Gastrocnemius medialis (tissue), 4 donors: ENCODE measurements at regions of chr5 and their contacts with region 1.

Region 1: GRCh38 chr5:38167562-38167996 is 90.8 kb upstream of the EGFLAM start:
- DNase-seq: peak; percentile 90 to 91
- ATAC-seq: peak; percentile 50 to 63
- H3K4me3 ChIP-seq: peak overlapping the region; percentile 28 to 39 (median 37)
- H3K27ac ChIP-seq: peak overlapping the region; percentile 84 to 89 (median 87)
- H3K4me1 ChIP-seq: peaks cover 45 to 46% of the 10 kb centered on the region in 2 donors
- H3K27me3 ChIP-seq: no peaks in the 10 kb centered on the region
- CTCF ChIP-seq: no peak
- POLR2A ChIP-seq: peak; percentile 9 to 64

Region 2: DNA sequence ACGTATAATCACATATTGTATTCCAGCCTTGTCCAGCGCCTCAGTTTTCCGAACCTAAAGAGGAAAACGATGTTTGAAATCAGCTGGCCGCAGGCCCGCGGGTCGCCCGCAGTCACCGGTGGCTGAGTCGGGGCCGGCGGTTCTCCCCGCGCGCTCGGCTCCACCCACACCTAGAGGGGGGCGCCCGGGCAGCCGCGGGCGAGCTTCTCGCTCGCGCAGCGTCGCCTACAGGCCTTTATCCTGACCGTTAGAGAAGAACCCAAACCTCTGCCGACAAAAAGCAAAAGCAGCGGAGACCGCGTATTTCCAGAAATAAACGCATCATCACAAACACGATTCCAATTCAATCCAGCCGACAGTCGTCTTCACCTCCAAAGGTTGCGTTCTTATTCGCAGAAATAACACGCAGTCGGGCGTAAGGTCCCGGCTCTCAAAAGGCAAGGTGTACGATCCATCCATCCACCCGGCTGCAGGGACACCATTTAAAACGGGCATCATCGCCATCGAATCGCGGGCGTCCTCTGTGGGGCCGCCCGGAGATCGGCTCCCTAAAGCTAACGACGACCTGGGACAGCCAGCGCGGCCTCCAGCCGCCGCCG is 1291.7 kb before region 1 on chr5:
- in situ Hi-C with region 1: no loop called
- intact Hi-C with region 1: loop called (anchors 10 kb)
- DNase-seq: peak; percentile 67 to 78
- ATAC-seq: peak; percentile 69 to 77
- H3K4me3 ChIP-seq: peak overlapping the region; percentile 93 to 99 (median 98)
- H3K27ac ChIP-seq: peak overlapping the region; percentile 91 to 100 (median 100)
- H3K4me1 ChIP-seq: peaks cover 46 to 55% of the 10 kb centered on the region in 2 donors
- H3K27me3 ChIP-seq: no peaks in the 10 kb centered on the region
- CTCF ChIP-seq: peak; percentile 14 to 66 (median 34)
- POLR2A ChIP-seq: no peak

Region 3: DNA sequence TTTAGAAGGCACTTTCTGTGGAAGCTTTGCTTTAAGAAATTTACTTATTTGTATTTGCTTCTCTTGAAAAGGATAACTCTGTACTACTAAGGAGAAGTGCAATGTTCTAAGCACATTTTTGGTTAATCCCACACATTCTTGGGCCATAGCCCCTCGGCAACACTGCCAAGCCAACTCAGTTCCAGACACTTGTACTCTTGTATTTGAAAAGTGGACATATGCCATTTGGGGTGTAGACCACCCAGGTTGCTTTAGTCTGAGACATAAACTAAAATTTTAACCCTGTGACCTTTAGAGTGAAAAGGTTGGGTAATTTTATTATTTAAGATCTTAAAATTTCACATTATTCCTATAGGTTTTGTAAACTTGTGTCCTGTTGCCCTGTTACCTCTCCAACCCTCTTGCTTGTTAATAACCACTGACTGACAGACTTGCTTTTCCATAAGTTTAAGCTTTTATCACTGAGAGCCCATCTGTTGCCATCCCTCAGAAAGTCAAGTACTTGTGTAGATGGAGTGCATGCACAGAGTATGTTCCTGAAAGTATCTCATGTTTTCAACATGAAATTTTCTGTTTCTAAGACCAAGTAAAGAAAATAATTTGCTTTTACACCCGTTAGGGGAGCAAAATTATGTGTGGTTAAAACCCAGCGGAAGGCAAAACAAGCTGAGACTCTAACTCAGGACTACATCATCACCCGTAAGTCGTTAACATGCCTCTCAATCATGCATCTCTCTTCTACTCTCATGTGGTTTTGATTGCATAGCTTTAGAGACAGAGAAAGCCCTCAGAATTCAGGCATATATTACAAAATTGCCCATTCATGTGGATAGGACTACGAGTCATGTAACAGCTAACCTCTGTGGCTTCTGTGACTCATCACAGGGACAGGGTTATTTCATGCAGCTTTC is 445.1 kb before region 1 on chr5:
- in situ Hi-C with region 1: no loop called
- intact Hi-C with region 1: loop called (anchors 2 kb)
- DNase-seq: no peak
- ATAC-seq: no peak
- H3K4me3 ChIP-seq: no peak overlapping the region
- H3K27ac ChIP-seq: peak overlapping the region in 3 of 4 donors; percentile 63 to 79 (median 73)
- H3K4me1 ChIP-seq: peaks cover 10 to 24% of the 10 kb centered on the region in 2 donors
- H3K27me3 ChIP-seq: no peaks in the 10 kb centered on the region
- CTCF ChIP-seq: no peak
- POLR2A ChIP-seq: no peak

Region 4: GRCh38 chr5:38187532-38187931 is 20.0 kb after region 1 on chr5:
- in situ Hi-C with region 1: no loop called
- intact Hi-C with region 1: loop called (anchors 1 kb)
- DNase-seq: no peak
- ATAC-seq: peak; percentile 72 to 79
- H3K4me3 ChIP-seq: no peak overlapping the region
- H3K27ac ChIP-seq: no peak overlapping the region
- H3K4me1 ChIP-seq: peaks cover 7 to 19% of the 10 kb centered on the region in 2 donors
- H3K27me3 ChIP-seq: no peaks in the 10 kb centered on the region
- CTCF ChIP-seq: no peak
- POLR2A ChIP-seq: no peak

Region 5: GRCh38 chr5:38463634-38464521 is 296.3 kb after region 1 on chr5:
- in situ Hi-C with region 1: no loop called
- intact Hi-C with region 1: loop called (anchors 5 kb)
- DNase-seq: peak in 1 of 2 donors; percentile 56
- ATAC-seq: peak; percentile 7 to 12
- H3K4me3 ChIP-seq: no peak overlapping the region
- H3K27ac ChIP-seq: peak overlapping the region; percentile 95 to 99 (median 97)
- H3K4me1 ChIP-seq: peaks cover 66 to 67% of the 10 kb centered on the region in 2 donors
- H3K27me3 ChIP-seq: no peaks in the 10 kb centered on the region
- CTCF ChIP-seq: no peak
- POLR2A ChIP-seq: no peak

Region 6: DNA sequence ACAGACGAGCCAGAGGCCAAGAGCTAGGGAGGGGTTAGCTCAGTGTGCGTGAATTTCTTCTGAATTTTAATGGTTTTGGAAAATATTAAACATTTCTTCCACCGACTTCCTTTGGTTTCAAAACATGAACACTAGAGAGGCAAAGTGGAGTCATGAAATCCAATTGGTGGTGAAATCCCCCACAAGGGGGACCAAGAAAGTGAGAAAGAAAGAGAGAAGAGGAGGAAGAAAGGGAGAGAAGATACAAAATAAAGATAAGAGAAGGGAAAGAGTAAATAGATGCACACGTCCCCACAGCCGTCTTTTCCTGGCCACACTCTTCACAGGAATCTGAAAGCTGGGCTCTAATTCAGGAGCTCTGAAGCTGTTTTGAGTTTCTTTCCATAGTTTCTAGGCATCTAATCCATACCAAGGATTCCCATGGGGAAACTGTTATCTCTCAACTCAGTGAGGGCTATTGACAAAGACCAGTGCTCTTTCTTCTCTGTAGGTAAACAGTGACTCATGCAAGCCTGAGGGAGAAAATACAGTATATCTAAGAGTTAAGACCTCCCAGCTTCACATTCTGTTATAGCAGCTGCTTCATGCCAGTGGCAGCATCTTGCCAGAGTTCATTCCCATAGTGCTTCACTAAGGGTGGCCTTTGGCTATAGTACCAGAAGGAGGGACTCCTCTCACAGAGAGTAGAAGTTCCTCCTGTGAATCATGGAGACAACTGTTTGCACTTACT is 504.6 kb after region 1 on chr5:
- in situ Hi-C with region 1: no loop called
- intact Hi-C with region 1: no loop called
- DNase-seq: no peak
- ATAC-seq: no peak
- H3K4me3 ChIP-seq: no peak overlapping the region
- H3K27ac ChIP-seq: no peak overlapping the region
- H3K4me1 ChIP-seq: peaks cover 0 to 5% of the 10 kb centered on the region in 2 donors
- H3K27me3 ChIP-seq: no peaks in the 10 kb centered on the region
- CTCF ChIP-seq: no peak
- POLR2A ChIP-seq: no peak